ENCODE measurements at regions of chr1 and their contacts with region 1.

Region 1: GRCh38 chr1:8047681-8048445 is 21.8 kb upstream of the ERRFI1 start:
- DNase-seq: no peak
- H3K4me3 Mint-ChIP-seq: no peak overlapping the region
- H3K27ac Mint-ChIP-seq: no peak overlapping the region
- H3K4me1 Mint-ChIP-seq: peaks cover 11% of the 10 kb centered on the region
- H3K27me3 Mint-ChIP-seq: peaks cover 2% of the 10 kb centered on the region

Region 2: DNA sequence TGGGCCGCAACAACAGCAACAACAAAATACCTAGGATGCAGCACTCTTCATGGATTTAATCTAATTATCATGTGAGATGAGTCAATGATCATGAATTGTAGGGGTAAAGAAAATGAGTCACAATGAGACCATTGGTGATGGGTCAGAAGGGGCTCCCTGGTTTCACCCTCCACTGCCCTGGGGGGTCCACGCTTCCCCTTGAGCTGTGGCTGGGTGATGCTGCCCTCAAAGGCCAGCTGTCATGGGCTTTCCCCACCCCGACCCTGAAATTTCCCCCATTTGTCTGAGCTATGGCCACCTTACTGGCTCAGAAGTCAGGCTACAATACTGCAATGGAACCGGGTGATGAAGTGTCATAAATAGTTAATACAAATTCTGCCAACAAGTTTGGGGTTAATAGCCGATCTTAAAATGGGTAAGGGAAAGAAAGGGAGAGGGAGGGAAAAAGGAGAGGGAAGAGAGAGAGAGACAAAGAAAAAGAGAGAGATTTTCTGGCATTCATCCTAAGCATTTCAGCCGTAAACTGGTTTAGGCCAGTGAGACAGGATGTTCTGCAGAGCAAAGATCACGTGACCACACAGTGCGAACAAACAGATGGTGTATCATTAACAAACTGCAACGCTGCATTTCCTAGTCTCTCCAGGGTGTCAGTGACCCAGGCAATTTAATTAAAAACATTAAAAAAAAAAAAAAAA is 121.6 kb after region 1 on chr1:
- CTCF ChIA-PET with region 1: no interaction called
- intact Hi-C with region 1: loop called (anchors 5 kb)
- DNase-seq: peak; percentile 72
- H3K4me3 Mint-ChIP-seq: peak overlapping the region; percentile 57
- H3K27ac Mint-ChIP-seq: peak overlapping the region; percentile 91
- H3K4me1 Mint-ChIP-seq: peaks cover 29% of the 10 kb centered on the region
- H3K27me3 Mint-ChIP-seq: no peaks in the 10 kb centered on the region

Measured in activated naive CD4-positive, alpha-beta T cell treated with anti-CD3 and anti-CD28 coated beads for 36 hours (primary cell).